Activated CD4-positive, alpha-beta T cell treated with anti-CD3 and anti-CD28 coated beads, Interleukin-2, amount 10 ng/mL, durations not matched to agents 24 days and 14 days (primary cell): ENCODE measurements at regions of chr14 and their contacts with region 1.

Region 1: GRCh38 chr14:72023722-72024407 is 91.6 kb downstream of the RGS6 start:
- DNase-seq: peak; percentile 83
- H3K4me3 Mint-ChIP-seq: peak overlapping the region; percentile 20
- H3K27ac Mint-ChIP-seq: peak overlapping the region; percentile 26
- H3K4me1 Mint-ChIP-seq: peaks cover 10% of the 10 kb centered on the region
- H3K27me3 Mint-ChIP-seq: peaks cover 16% of the 10 kb centered on the region

Region 2: GRCh38 chr14:71967704-71968103 is 56.2 kb before region 1 on chr14:
- intact Hi-C with region 1: loop called (anchors 1 kb)
- DNase-seq: no peak
- H3K4me3 Mint-ChIP-seq: peak overlapping the region; percentile 63
- H3K27ac Mint-ChIP-seq: peak overlapping the region; percentile 90
- H3K4me1 Mint-ChIP-seq: peaks cover 11% of the 10 kb centered on the region
- H3K27me3 Mint-ChIP-seq: peaks cover 8% of the 10 kb centered on the region

Region 3: GRCh38 chr14:72049455-72049854 is 25.6 kb after region 1 on chr14:
- intact Hi-C with region 1: loop called (anchors 1 kb)
- DNase-seq: peak; percentile 75
- H3K4me3 Mint-ChIP-seq: peak overlapping the region; percentile 40
- H3K27ac Mint-ChIP-seq: peak overlapping the region; percentile 79
- H3K4me1 Mint-ChIP-seq: peaks cover 17% of the 10 kb centered on the region
- H3K27me3 Mint-ChIP-seq: peaks cover 7% of the 10 kb centered on the region

Region 4: DNA sequence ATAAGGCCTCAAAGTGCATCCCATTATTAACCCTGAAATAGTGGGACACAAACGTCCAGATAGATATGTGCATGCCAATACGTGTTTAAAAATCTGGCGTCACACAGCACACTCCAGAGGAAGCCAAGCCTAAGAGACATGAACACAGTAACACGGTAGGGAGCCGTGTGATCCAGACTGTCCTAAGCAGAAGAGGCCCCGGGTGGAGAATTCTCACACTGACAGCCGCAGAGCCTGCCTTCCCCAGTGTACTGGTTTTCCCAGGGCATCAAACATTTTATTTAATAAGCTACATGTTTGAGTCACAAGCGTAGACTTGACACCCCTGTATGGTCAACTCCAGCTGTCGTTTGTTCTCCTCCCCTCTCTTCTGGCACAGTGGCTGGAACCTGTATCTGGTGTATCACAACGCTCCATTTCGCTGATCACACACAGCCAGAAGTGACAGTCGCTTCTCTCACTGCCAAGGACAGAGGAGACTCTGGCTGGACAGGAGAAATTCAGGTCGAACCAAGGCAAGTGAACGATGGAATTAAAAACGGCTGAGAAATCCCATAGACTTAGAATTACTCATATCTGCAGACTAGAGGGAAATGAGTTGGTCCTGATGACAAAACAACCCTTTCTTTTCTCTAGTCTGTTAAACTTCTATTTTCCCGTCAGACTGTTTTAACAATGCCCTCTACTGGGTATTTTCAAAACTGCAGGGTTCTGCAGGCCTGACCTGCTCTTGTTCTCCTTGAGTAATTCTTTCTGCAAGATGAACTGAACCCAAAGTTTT is 268.2 kb after region 1 on chr14:
- intact Hi-C with region 1: loop called (anchors 2 kb)
- DNase-seq: peak; percentile 79
- H3K4me3 Mint-ChIP-seq: no peak overlapping the region
- H3K27ac Mint-ChIP-seq: no peak overlapping the region
- H3K4me1 Mint-ChIP-seq: no peaks in the 10 kb centered on the region
- H3K27me3 Mint-ChIP-seq: peaks cover 16% of the 10 kb centered on the region

Region 5: GRCh38 chr14:72420725-72421474 is 397.0 kb after region 1 on chr14:
- intact Hi-C with region 1: loop called (anchors 1 kb)
- DNase-seq: peak; percentile 95
- H3K4me3 Mint-ChIP-seq: peak overlapping the region; percentile 55
- H3K27ac Mint-ChIP-seq: peak overlapping the region; percentile 69
- H3K4me1 Mint-ChIP-seq: peaks cover 25% of the 10 kb centered on the region
- H3K27me3 Mint-ChIP-seq: peaks cover 4% of the 10 kb centered on the region